Activated naive CD4-positive, alpha-beta T cell treated with anti-CD3 and anti-CD28 coated beads, Interleukin-2, amount 10 ng/mL, durations not matched to agents 7 days and 5 days (primary cell): ENCODE measurements at regions of chr6 and their contacts with region 1.

Region 1: DNA sequence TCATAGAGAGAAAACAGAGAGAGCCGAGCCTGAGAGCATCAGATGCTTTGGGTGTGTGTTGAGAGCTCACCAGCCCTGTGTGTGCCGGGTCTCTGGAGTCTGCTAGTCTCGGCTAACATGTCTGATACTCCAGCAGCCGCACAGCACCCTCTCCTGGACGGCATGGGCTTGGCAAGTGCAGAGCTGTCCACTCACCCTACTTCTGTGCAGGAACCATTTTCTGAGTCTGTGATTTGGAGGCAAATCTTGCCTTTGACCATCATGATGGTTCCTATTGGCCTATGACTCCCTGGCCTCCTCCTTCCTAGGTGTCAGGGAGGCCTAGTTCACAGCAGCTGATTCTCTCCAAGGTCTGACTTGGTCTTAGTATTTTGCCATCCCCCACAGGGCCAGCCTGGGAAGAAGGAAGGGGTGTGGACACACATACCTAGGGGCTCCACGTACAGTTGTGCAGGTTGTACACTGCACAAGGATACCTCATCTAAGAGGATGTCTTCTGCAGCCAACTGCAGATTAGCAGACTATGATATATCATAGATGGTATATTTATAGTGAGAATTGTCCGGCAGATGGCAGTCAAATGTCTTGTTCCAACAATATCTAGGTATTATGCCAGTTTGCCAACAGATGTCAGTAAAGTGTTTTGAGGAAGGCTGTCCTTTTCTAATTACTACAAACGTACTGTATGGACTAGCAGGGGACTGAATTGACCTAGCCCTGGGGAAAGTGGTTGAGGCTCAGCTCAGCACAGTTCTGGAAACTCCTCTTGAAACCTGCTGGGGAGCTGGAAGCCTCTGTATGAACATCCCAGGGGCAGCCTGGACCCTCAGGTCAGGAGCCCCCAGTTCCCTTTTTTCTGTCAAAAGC is 13.0 kb downstream of the FGD2 start:
- DNase-seq: peak; percentile 96
- H3K4me3 Mint-ChIP-seq: no peak overlapping the region
- H3K27ac Mint-ChIP-seq: peak overlapping the region; percentile 85
- H3K4me1 Mint-ChIP-seq: peaks cover 58% of the 10 kb centered on the region
- H3K27me3 Mint-ChIP-seq: no peaks in the 10 kb centered on the region

Region 2: GRCh38 chr6:36716476-36717093 is 301.8 kb before region 1 on chr6:
- CTCF ChIA-PET with region 1: no interaction called
- DNase-seq: peak; percentile 11
- H3K4me3 Mint-ChIP-seq: no peak overlapping the region
- H3K27ac Mint-ChIP-seq: no peak overlapping the region
- H3K4me1 Mint-ChIP-seq: no peaks in the 10 kb centered on the region
- H3K27me3 Mint-ChIP-seq: peaks cover 47% of the 10 kb centered on the region

Region 3: GRCh38 chr6:36780442-36781177 is 237.8 kb before region 1 on chr6:
- CTCF ChIA-PET with region 1: interaction called, 21 read pairs
- DNase-seq: no peak
- H3K4me3 Mint-ChIP-seq: no peak overlapping the region
- H3K27ac Mint-ChIP-seq: no peak overlapping the region
- H3K4me1 Mint-ChIP-seq: peaks cover 12% of the 10 kb centered on the region
- H3K27me3 Mint-ChIP-seq: peaks cover 70% of the 10 kb centered on the region

Region 4: DNA sequence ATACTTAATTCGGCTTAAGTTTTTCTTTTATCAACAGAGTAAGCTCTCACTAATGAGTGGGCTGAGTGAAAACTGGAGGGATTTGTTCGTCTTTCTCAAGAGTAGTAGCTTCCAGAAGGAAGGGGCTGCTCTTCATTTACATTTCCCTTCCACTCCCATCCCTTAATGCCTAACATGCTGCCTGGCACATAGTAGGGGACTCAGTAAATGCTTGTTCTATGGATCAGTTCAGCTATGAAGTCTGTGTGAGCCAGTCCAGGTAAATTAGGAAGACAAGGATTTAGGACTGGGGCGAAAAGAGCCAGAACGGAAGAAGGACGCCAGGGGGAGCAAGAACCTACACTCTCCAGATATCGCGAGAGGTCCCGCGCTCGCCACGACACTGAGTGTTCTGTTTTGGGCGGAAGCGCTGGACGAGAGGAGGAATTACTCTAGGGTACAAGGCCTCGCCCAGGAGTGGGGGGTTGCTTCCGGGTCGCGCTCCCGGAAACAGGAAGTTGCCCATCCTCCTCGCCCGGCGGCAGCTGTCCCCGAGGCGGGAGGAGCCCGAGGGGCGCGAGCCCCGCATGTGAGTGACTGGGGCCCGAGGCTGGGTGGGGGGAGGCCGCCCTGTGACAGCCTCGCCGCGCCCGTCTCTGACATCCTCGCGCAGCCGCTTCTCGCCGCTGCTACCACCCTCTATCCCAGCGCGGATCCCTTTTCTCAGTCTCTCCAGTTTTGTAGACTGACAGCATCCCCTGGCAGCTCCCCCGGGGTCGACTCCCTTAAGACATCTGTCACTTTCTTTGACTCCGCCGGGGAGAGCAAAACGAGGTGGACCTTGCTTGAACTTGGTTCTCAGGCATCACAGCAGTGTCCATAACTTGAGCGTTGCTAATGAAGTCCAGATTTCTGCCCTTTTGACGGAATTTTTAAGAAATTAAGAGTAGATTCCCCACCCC is 132.7 kb before region 1 on chr6 and contains the start of gene C6orf89:
- CTCF ChIA-PET with region 1: interaction called, 96 read pairs
- DNase-seq: peak; percentile 99
- H3K4me3 Mint-ChIP-seq: peak within 1 kb of the TSS; percentile 90
- H3K27ac Mint-ChIP-seq: peak within 1 kb of the TSS; percentile 92
- H3K4me1 Mint-ChIP-seq: peaks cover 37% of the 10 kb centered on the region
- H3K27me3 Mint-ChIP-seq: no peaks in the 10 kb centered on the region

Region 5: GRCh38 chr6:36979347-36979742 is 39.1 kb before region 1 on chr6:
- CTCF ChIA-PET with region 1: interaction called, 54 read pairs
- DNase-seq: peak; percentile 72
- H3K4me3 Mint-ChIP-seq: no peak overlapping the region
- H3K27ac Mint-ChIP-seq: peak overlapping the region; percentile 74
- H3K4me1 Mint-ChIP-seq: peaks cover 32% of the 10 kb centered on the region
- H3K27me3 Mint-ChIP-seq: no peaks in the 10 kb centered on the region

Region 6: GRCh38 chr6:37051138-37052026 is 33.0 kb after region 1 on chr6:
- CTCF ChIA-PET with region 1: interaction called, 391 read pairs
- DNase-seq: peak; percentile 94
- H3K4me3 Mint-ChIP-seq: peak overlapping the region; percentile 89
- H3K27ac Mint-ChIP-seq: peak overlapping the region; percentile 98
- H3K4me1 Mint-ChIP-seq: peaks cover 82% of the 10 kb centered on the region
- H3K27me3 Mint-ChIP-seq: no peaks in the 10 kb centered on the region

Region 7: GRCh38 chr6:37314487-37315156 is 296.2 kb after region 1 on chr6:
- CTCF ChIA-PET with region 1: interaction called, 182 read pairs
- DNase-seq: peak; percentile 75
- H3K4me3 Mint-ChIP-seq: no peak overlapping the region
- H3K27ac Mint-ChIP-seq: no peak overlapping the region
- H3K4me1 Mint-ChIP-seq: peaks cover 17% of the 10 kb centered on the region
- H3K27me3 Mint-ChIP-seq: no peaks in the 10 kb centered on the region